ENCODE measurements at regions of chr15 and their contacts with region 1.

Region 1: DNA sequence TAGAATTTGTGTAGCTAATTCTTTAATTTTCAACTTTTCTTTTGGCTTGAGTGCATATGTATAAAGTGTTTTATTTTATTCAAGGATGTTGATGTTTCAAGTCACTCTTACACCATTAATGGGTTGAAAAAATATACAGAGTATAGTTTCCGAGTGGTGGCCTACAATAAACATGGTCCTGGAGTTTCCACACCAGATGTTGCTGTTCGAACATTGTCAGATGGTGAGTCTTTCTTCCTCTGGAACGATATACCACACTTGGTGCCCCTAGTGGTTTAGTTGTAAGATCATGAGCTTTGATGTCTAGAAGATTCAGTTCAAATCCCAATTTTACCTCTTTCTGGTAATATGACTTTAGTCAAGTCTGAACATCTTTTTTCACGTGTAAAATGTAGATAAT is 119.3 kb downstream of the HCN4 start:
- DNase-seq: no peak
- ATAC-seq: no peak
- H3K4me3 ChIP-seq: no peak overlapping the region
- H3K27ac ChIP-seq: no peak overlapping the region
- H3K4me1 ChIP-seq: no peaks in the 10 kb centered on the region
- H3K27me3 ChIP-seq: 0 out of 2 replicates have a peak, but pooled peaks cover 4% of the 10 kb centered on the region
- CTCF ChIP-seq: no peak

Region 2: GRCh38 chr15:72933976-72934375 is 315.5 kb before region 1 on chr15:
- CTCF ChIA-PET with region 1: no interaction called
- POLR2A ChIA-PET with region 1: no interaction called
- intact Hi-C with region 1: no loop called
- DNase-seq: no peak
- ATAC-seq: no peak
- H3K4me3 ChIP-seq: no peak overlapping the region
- H3K27ac ChIP-seq: no peak overlapping the region
- H3K4me1 ChIP-seq: no peaks in the 10 kb centered on the region
- H3K27me3 ChIP-seq: peaks cover 48% of the 10 kb centered on the region
- CTCF ChIP-seq: no peak

Region 3: GRCh38 chr15:73295630-73296286 is 46.3 kb after region 1 on chr15:
- CTCF ChIA-PET with region 1: no interaction called
- POLR2A ChIA-PET with region 1: no interaction called
- intact Hi-C with region 1: no loop called
- DNase-seq: no peak
- ATAC-seq: no peak
- H3K4me3 ChIP-seq: no peak overlapping the region
- H3K27ac ChIP-seq: no peak overlapping the region
- H3K4me1 ChIP-seq: no peaks in the 10 kb centered on the region
- H3K27me3 ChIP-seq: peaks cover 9% of the 10 kb centered on the region
- CTCF ChIP-seq: no peak

Region 4: GRCh38 chr15:73318463-73319351 is 69.2 kb after region 1 on chr15:
- CTCF ChIA-PET with region 1: no interaction called
- POLR2A ChIA-PET with region 1: no interaction called
- intact Hi-C with region 1: no loop called
- DNase-seq: no peak
- ATAC-seq: no peak
- H3K4me3 ChIP-seq: no peak overlapping the region
- H3K27ac ChIP-seq: no peak overlapping the region
- H3K4me1 ChIP-seq: no peaks in the 10 kb centered on the region
- H3K27me3 ChIP-seq: no peaks in the 10 kb centered on the region
- CTCF ChIP-seq: no peak

Region 5: GRCh38 chr15:73727330-73727976 is 478.0 kb after region 1 on chr15:
- CTCF ChIA-PET with region 1: no interaction called
- POLR2A ChIA-PET with region 1: interaction called, 14 read pairs
- intact Hi-C with region 1: no loop called
- DNase-seq: peak; percentile 69
- ATAC-seq: peak; percentile 78
- H3K4me3 ChIP-seq: no peak overlapping the region
- H3K27ac ChIP-seq: no peak overlapping the region
- H3K4me1 ChIP-seq: no peaks in the 10 kb centered on the region
- H3K27me3 ChIP-seq: no peaks in the 10 kb centered on the region
- CTCF ChIP-seq: no peak

Measured in PC-3 (cell line).